ENCODE measurements at regions of chr2 and their contacts with region 1.

Region 1: DNA sequence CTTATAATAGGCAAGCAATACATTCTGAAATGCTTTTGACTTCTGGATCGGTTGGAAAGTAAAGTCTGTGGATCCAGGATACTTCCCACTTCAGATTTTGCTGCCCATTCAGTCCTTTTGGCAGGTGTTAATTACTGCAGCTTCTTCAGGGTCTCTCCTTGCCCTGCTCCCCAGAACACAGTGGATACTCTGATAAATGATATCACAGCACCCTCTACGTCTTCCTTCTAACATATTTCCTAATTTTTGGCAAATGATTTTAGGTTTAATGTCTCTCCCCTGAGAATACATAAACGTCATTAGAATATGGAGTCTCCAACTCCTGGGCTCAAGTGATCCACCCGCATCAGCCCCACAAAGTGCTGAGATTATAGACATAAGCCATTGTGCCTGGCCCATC is 249.8 kb downstream of the NYAP2 start:
- DNase-seq: no peak
- ATAC-seq: no peak
- H3K4me3 ChIP-seq: no peak overlapping the region
- H3K27ac ChIP-seq: no peak overlapping the region
- H3K4me1 ChIP-seq: no peaks in the 10 kb centered on the region
- H3K27me3 ChIP-seq: peaks cover 7% of the 10 kb centered on the region
- CTCF ChIP-seq: no peak
- POLR2A ChIP-seq: no peak
- RAD21 ChIP-seq: no peak

Region 2: DNA sequence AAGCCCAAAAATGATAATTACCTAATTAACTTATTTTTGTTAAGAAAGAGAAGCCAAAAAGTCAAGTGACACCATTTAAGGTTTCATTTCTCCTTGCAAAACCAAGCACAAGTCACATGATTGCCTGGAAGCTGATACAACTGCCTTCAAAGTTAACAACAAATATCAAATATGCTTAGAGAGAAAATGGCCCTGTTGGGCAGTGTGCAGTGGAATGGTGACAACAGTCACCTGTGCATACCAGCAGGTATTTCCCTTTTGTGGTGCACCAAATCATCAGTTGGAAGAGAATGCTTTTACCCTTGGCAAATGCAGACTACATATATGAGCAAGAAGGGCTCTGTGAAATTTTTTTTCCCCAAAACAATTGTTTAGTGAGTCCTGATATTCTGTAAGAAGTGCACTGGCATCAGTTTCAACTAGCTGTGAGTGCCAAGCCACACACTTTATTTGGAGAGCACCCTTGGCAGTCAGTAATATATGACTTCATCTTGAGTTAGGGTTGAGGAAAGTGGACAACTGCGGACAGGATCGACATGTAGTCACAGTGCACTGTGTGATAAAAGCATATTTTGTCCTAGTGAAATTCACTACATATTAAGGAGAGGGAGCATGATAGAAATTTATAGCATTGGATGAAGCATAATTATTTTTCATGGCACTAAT is 532.1 kb before region 1 on chr2:
- CTCF ChIA-PET with region 1: no interaction called
- POLR2A ChIA-PET with region 1: no interaction called
- dilution Hi-C with region 1: no loop called
- in situ Hi-C with region 1: loop called (anchors 5 kb)
- intact Hi-C with region 1: no loop called
- DNase-seq: peak; percentile 11
- ATAC-seq: no peak
- H3K4me3 ChIP-seq: no peak overlapping the region
- H3K27ac ChIP-seq: no peak overlapping the region
- H3K4me1 ChIP-seq: peaks cover 3% of the 10 kb centered on the region; the same call in 1 of the 2 replicates
- H3K27me3 ChIP-seq: no peaks in the 10 kb centered on the region
- CTCF ChIP-seq: no peak
- POLR2A ChIP-seq: no peak
- RAD21 ChIP-seq: no peak

Region 3: GRCh38 chr2:225630824-225631533 is 18.3 kb before region 1 on chr2:
- CTCF ChIA-PET with region 1: no interaction called
- POLR2A ChIA-PET with region 1: no interaction called
- dilution Hi-C with region 1: no loop called
- in situ Hi-C with region 1: no loop called
- intact Hi-C with region 1: no loop called
- DNase-seq: no peak
- ATAC-seq: no peak
- H3K4me3 ChIP-seq: no peak overlapping the region
- H3K27ac ChIP-seq: no peak overlapping the region
- H3K4me1 ChIP-seq: no peaks in the 10 kb centered on the region
- H3K27me3 ChIP-seq: peaks cover 5% of the 10 kb centered on the region
- CTCF ChIP-seq: no peak
- POLR2A ChIP-seq: no peak
- RAD21 ChIP-seq: no peak

Region 4: GRCh38 chr2:225824748-225825449 is 175.6 kb after region 1 on chr2:
- CTCF ChIA-PET with region 1: no interaction called
- POLR2A ChIA-PET with region 1: no interaction called
- dilution Hi-C with region 1: no loop called
- in situ Hi-C with region 1: no loop called
- intact Hi-C with region 1: no loop called
- DNase-seq: no peak
- ATAC-seq: no peak
- H3K4me3 ChIP-seq: no peak overlapping the region
- H3K27ac ChIP-seq: no peak overlapping the region
- H3K4me1 ChIP-seq: no peaks in the 10 kb centered on the region
- H3K27me3 ChIP-seq: no peaks in the 10 kb centered on the region
- CTCF ChIP-seq: no peak
- POLR2A ChIP-seq: no peak
- RAD21 ChIP-seq: no peak

Measured in IMR-90 (cell line).